BJ (cell line): ENCODE measurements at regions of chr1 and their contacts with region 1.

Region 1: GRCh38 chr1:61659061-61659460 is 65.9 kb downstream of the TM2D1 start:
- DNase-seq: no peak
- H3K4me3 ChIP-seq: no peak overlapping the region
- H3K27me3 ChIP-seq: no peaks in the 10 kb centered on the region
- CTCF ChIP-seq: peak; percentile 19; the same call in 1 of the 2 replicates

Region 2: GRCh38 chr1:61626816-61627215 is 32.2 kb before region 1 on chr1:
- CTCF ChIA-PET with region 1: no interaction called
- POLR2A ChIA-PET with region 1: interaction called, 17 read pairs
- DNase-seq: no peak
- H3K4me3 ChIP-seq: no peak overlapping the region
- H3K27me3 ChIP-seq: peaks cover 1% of the 10 kb centered on the region; the same call in 1 of the 2 replicates
- CTCF ChIP-seq: no peak